ENCODE measurements at regions of chr11 and their contacts with region 1.

Region 1: DNA sequence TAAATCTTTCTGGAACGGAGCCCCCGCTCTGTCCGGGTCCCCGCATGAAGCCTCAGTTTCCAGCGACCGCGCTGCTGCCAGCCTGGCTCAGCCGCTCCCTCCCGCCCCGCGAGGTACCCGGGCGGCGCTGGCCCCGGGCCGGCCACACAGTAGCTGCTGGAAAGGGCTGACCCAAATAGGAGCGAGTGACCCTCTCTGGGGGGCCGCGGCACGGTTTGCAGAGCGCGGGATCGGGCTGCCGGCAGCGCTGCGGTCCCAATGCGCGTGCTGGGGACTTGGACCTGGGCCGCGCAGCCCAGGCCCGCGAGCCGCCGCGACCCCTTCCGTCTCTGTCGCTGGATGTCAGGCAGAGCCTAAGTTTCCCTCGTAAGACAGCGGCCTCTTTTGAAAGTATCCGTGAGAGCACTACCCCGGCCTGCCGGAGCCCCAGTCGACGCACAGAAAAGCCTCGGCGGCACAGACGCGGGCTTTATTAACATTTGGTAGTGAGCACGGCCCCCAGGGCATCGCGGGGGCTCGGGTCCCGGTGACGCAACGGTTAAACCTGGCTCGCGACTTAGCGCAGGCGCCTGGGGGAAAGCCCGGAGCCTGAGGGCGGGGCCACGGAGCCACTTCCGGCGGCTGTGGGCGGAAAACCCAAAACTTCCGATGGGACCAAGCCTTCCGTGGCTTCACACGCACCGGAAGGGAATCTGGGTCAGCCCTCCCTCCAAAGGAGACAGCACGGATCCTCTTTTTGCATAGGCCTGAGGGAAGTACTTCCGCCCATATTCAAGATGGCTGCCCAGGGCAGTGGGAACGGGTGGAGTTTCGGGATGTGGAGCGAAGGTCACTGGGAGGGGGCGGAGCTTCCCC is 14.9 kb downstream of the BAD start:
- DNase-seq: peak; percentile 94 to 99
- ATAC-seq: peak; percentile 68 to 83 (median 72)
- H3K4me3 ChIP-seq: peak overlapping the region; percentile 53
- H3K4me3 Mint-ChIP-seq: peak overlapping the region; percentile 97
- H3K27ac ChIP-seq: peak overlapping the region; percentile 92
- H3K27ac Mint-ChIP-seq: peak overlapping the region; percentile 94 to 100
- H3K4me1 ChIP-seq: peaks cover 42% of the 10 kb centered on the region
- H3K4me1 Mint-ChIP-seq: peaks cover 36 to 40% of the 10 kb centered on the region in 2 donors
- H3K27me3 ChIP-seq: no peaks in the 10 kb centered on the region
- H3K27me3 Mint-ChIP-seq: no peaks in the 10 kb centered on the region
- CTCF ChIP-seq: peak; percentile 34

Region 2: GRCh38 chr11:64230171-64230984 is 39.2 kb before region 1 on chr11 and contains the start of gene DNAJC4:
- intact Hi-C with region 1: loop called (anchors 1 kb)
- DNase-seq: peak; percentile 86 to 92
- ATAC-seq: peak; percentile 64 to 78 (median 65)
- H3K4me3 ChIP-seq: peak within 1 kb of the TSS; percentile 93
- H3K4me3 Mint-ChIP-seq: peak within 1 kb of the TSS; percentile 94
- H3K27ac ChIP-seq: peak within 1 kb of the TSS; percentile 95
- H3K27ac Mint-ChIP-seq: peak within 1 kb of the TSS; percentile 93 to 97
- H3K4me1 ChIP-seq: peaks cover 66% of the 10 kb centered on the region
- H3K4me1 Mint-ChIP-seq: peaks cover 22 to 49% of the 10 kb centered on the region in 2 donors
- H3K27me3 ChIP-seq: no peaks in the 10 kb centered on the region
- H3K27me3 Mint-ChIP-seq: no peaks in the 10 kb centered on the region
- CTCF ChIP-seq: no peak
- total RNA-seq, gene DNAJC4: 45.0 to 47.0 (median 46.6) TPM

Region 3: GRCh38 chr11:64251016-64251752 is 18.4 kb before region 1 on chr11 and contains the start of gene PLCB3:
- intact Hi-C with region 1: loop called (anchors 2 kb)
- DNase-seq: peak; percentile 67 to 77
- ATAC-seq: peak; percentile 72 to 86 (median 79)
- H3K4me3 ChIP-seq: peak within 1 kb of the TSS; percentile 58
- H3K4me3 Mint-ChIP-seq: peak within 1 kb of the TSS; percentile 86
- H3K27ac ChIP-seq: no peak within 1 kb of the TSS
- H3K27ac Mint-ChIP-seq: peak within 1 kb of the TSS in 1 of 2 donors; percentile 86
- H3K4me1 ChIP-seq: peaks cover 41% of the 10 kb centered on the region
- H3K4me1 Mint-ChIP-seq: peaks cover 14 to 30% of the 10 kb centered on the region in 2 donors
- H3K27me3 ChIP-seq: no peaks in the 10 kb centered on the region
- H3K27me3 Mint-ChIP-seq: no peaks in the 10 kb centered on the region
- CTCF ChIP-seq: peak; percentile 78
- total RNA-seq, gene PLCB3: 5.4 to 7.6 (median 5.5) TPM

Region 4: GRCh38 chr11:64317957-64318693 is 48.5 kb after region 1 on chr11 and contains the start of gene PRDX5:
- intact Hi-C with region 1: loop called (anchors 1 kb)
- DNase-seq: peak; percentile 95 to 99
- ATAC-seq: peak; percentile 74 to 90 (median 78)
- H3K4me3 ChIP-seq: peak within 1 kb of the TSS; percentile 91
- H3K4me3 Mint-ChIP-seq: peak within 1 kb of the TSS; percentile 97
- H3K27ac ChIP-seq: peak within 1 kb of the TSS; percentile 86
- H3K27ac Mint-ChIP-seq: peak within 1 kb of the TSS; percentile 88 to 99
- H3K4me1 ChIP-seq: peaks cover 30% of the 10 kb centered on the region
- H3K4me1 Mint-ChIP-seq: peaks cover 47 to 54% of the 10 kb centered on the region in 2 donors
- H3K27me3 ChIP-seq: no peaks in the 10 kb centered on the region
- H3K27me3 Mint-ChIP-seq: no peaks in the 10 kb centered on the region
- CTCF ChIP-seq: no peak
- total RNA-seq, gene PRDX5: 85.9 to 104 (median 88.8) TPM

Measured in natural killer cell (primary cell).